Posterior cingulate gyrus (tissue), 11 donors: ENCODE measurements at regions of chr12 and their contacts with region 1.

Region 1: DNA sequence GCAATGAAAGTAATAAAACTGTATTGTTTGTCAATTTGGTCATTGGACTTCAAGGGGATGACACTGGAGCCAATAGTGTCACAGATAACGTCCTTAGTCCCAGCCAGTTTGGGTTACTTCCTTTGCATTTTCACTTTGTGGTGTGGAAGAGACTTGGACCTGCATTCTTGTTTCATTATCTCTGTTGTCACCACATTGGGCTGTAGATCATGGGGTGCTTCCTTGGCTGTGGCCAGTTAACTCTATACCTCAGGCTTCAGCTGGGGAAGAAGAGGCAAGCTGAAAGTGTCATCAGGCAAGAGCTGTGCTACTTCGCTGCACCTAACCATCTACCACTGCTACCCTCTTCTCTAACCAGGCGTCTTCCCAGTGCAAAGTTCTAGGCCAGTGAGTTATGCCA is 15.1 kb upstream of the CISTR start:
- DNase-seq: no peak

Region 2: DNA sequence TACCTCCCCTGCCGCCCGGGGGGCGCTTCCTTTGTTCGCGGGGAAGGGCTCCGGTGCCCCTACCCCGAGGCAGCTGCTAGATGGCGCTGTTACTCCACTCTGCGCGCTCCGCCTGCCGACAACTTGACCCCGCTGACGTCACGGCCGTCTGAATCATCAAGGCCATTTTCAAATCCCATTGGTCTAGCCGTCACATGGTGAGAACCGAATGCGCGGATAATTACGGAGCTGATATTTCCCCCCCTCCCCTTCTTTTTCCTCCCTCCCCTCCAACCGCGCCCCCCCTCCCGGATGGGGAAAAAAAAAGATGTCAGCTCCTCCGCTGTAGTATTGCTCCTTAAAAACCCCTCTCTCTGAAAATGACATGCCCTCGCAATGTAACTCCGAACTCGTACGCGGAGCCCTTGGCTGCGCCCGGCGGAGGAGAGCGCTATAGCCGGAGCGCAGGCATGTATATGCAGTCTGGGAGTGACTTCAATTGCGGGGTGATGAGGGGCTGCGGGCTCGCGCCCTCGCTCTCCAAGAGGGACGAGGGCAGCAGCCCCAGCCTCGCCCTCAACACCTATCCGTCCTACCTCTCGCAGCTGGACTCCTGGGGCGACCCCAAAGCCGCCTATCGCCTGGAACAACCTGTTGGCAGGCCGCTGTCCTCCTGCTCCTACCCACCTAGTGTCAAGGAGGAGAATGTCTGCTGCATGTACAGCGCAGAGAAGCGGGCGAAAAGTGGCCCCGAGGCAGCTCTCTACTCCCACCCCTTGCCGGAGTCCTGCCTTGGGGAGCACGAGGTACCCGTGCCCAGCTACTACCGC is 218.2 kb after region 1 on chr12 and contains the start of gene HOXC10:
- intact Hi-C with region 1: loop called (anchors 5 kb)
- DNase-seq: peak in 6 of 10 donors; percentile 29 to 91 (median 58)